ENCODE measurements at regions of chr1 and their contacts with region 1.

Region 1: DNA sequence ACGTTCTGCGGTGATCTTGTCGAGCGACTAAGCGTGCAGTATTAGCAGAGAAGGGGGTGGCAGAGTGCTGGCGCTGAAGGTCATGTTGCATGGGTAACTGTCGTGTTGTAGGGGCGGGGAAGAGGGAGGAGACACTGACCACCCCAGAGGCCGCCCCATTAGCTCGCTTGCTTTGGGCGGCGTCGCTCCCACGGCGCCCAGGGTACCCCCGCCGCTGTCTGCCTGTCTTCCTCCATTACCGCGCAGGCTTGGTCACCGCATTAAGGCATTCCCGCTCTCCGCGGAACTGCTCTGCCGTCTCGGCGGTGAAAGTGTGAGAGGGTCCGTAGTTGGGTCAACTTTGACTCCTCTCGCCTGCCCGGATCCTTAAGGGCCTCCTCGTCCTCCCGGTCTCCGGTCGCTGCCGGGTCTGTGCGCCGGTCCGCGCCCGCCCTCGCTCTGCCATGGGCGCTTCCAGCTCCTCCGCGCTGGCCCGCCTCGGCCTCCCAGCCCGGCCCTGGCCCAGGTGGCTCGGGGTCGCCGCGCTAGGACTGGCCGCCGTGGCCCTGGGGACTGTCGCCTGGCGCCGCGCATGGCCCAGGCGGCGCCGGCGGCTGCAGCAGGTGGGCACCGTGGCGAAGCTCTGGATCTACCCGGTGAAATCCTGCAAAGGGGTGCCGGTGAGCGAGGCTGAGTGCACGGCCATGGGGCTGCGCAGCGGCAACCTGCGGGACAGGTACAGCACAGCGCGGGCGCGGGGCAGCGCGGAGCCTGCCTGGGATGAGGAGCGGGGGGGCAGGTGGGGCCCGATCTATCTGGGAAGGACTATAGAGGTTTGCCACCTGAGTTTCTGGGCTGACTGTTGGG is at the start of gene MTARC2:
- DNase-seq: peak; percentile 62

Region 2: DNA sequence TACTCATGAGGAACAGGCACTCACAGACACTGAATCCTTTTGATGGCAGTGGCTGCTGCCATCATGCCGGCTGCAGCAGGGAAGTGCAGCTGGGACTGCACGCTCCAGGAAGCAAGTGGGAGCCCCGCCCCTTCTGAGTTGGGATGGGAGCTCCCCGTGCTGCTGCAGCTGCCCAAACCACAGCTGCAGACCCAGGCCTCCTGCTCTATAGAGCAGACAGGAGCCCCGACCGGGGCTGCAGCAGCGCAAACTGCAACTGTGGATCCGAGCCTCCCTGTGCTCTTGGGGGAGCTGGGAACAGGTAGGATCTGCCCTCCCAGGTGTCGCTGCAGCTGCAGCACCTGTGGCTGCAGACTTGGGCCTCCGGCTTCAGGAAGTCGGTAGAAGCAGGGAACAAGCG is 285.5 kb before region 1 on chr1:
- CTCF ChIA-PET with region 1: no interaction called
- POLR2A ChIA-PET with region 1: no interaction called
- DNase-seq: no peak

Region 3: DNA sequence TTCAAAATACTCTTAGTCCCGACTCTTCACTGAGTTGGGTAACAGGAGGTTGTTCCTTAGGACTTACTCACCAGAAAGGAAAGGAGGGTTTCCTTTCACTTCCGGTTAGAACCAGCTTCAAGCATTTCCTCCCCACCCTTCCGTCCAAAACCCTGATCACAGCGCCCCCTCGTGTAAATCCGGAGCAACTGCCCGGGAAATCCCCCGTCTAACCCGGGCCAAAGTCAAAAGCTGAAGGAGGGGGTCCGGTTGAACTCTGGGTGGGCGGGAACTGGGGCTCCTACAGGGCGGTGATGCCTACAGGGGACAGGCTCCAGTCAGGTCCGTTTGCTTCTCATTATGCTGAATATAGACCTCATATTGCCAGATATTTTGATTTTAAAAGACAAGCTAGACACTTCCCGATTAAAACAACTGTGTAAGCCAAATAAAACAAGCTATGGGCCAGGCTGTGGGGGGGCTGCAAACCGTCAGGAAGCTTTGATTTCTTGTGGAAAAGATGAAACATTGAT is 15.2 kb before region 1 on chr1:
- CTCF ChIA-PET with region 1: interaction called, 21 read pairs
- POLR2A ChIA-PET with region 1: interaction called, 22 read pairs
- DNase-seq: peak; percentile 89

Region 4: DNA sequence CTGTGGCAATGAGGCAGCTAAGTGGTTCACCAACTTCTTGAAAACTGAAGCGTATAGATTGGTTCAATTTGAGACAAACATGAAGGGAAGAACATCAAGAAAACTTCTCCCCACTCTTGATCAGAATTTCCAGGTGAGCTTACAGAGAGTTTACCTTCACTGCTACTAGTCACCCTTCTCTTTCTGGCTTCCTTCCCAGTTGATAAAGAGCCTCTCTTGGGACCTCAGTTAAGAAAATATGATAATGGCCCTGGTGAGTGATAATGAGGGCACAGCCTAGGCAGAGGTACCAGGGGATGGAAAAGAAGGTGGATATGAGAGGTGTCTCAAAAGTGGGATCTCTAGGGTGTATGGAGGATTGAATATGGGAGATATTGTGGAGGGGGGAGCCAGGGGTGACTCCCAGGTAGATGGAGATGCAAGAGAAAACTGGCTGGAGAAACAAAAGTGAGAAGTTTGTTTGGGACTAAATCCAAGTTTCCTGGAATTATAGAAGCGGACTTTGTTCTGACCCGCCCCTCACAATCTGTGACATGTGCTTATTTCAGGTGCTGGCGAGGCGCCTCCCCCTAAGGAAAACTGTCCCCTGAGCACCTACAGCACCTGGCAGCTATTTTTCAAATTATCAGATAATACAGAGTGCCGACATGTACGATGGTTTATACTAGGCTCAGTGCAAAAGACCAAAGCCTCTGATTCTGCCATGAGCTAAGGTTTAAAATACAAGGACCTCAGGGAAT is 13.5 kb after region 1 on chr1:
- CTCF ChIA-PET with region 1: no interaction called
- POLR2A ChIA-PET with region 1: interaction called, 20 read pairs
- DNase-seq: no peak

Measured in HEK293T (cell line).